IMR-90 (cell line): ENCODE measurements at regions of chr5 and their contacts with region 1.

Region 1: DNA sequence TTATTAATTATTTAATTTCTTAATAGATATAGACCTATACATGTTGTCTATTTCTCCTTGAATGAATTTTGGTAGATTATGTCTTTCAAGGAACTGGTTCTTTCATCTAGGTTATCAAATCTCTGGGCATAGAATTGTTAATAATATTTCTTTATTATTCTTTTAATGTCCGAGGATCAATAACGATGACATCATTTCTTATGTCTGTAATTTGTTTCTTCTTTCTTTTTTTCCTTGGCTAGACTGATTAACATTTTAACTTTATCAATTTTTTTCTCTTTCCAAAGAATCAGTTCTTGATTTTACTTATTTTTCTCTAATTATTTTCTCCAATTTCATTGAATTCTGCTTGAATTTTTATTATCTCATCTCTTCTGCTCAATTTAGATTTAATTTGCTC is 156.0 kb downstream of the ISL1 start:
- DNase-seq: no peak
- ATAC-seq: no peak
- H3K4me3 ChIP-seq: no peak overlapping the region
- H3K27ac ChIP-seq: no peak overlapping the region
- H3K4me1 ChIP-seq: no peaks in the 10 kb centered on the region
- H3K27me3 ChIP-seq: no peaks in the 10 kb centered on the region
- CTCF ChIP-seq: no peak
- POLR2A ChIP-seq: no peak
- RAD21 ChIP-seq: no peak

Region 2: GRCh38 chr5:51518607-51519006 is 20.6 kb before region 1 on chr5:
- CTCF ChIA-PET with region 1: no interaction called
- POLR2A ChIA-PET with region 1: no interaction called
- dilution Hi-C with region 1: no loop called
- in situ Hi-C with region 1: no loop called
- intact Hi-C with region 1: no loop called
- DNase-seq: no peak
- ATAC-seq: no peak
- H3K4me3 ChIP-seq: no peak overlapping the region
- H3K27ac ChIP-seq: no peak overlapping the region
- H3K4me1 ChIP-seq: no peaks in the 10 kb centered on the region
- H3K27me3 ChIP-seq: no peaks in the 10 kb centered on the region
- CTCF ChIP-seq: no peak
- POLR2A ChIP-seq: no peak
- RAD21 ChIP-seq: no peak

Region 3: GRCh38 chr5:51694826-51695225 is 155.6 kb after region 1 on chr5:
- CTCF ChIA-PET with region 1: no interaction called
- POLR2A ChIA-PET with region 1: no interaction called
- dilution Hi-C with region 1: no loop called
- in situ Hi-C with region 1: no loop called
- intact Hi-C with region 1: loop called (anchors 5 kb)
- DNase-seq: no peak
- ATAC-seq: no peak
- H3K4me3 ChIP-seq: no peak overlapping the region
- H3K27ac ChIP-seq: no peak overlapping the region
- H3K4me1 ChIP-seq: no peaks in the 10 kb centered on the region
- H3K27me3 ChIP-seq: no peaks in the 10 kb centered on the region
- CTCF ChIP-seq: no peak
- POLR2A ChIP-seq: no peak
- RAD21 ChIP-seq: no peak